Activated T-helper 1 cell treated with anti-CD3 and anti-CD28 coated beads, Interleukin-12 subunit alpha, Interleukin-12 subunit beta, Interleukin-2, Interleukin-4 antibody, amounts not matched to agents 30 ng/mL and 10 ng/mL and 1 ng/mL, durations not matched to agents 14 hours and 24 hours and 36 hours (primary cell): ENCODE measurements at regions of chr1 and their contacts with region 1.

Region 1: DNA sequence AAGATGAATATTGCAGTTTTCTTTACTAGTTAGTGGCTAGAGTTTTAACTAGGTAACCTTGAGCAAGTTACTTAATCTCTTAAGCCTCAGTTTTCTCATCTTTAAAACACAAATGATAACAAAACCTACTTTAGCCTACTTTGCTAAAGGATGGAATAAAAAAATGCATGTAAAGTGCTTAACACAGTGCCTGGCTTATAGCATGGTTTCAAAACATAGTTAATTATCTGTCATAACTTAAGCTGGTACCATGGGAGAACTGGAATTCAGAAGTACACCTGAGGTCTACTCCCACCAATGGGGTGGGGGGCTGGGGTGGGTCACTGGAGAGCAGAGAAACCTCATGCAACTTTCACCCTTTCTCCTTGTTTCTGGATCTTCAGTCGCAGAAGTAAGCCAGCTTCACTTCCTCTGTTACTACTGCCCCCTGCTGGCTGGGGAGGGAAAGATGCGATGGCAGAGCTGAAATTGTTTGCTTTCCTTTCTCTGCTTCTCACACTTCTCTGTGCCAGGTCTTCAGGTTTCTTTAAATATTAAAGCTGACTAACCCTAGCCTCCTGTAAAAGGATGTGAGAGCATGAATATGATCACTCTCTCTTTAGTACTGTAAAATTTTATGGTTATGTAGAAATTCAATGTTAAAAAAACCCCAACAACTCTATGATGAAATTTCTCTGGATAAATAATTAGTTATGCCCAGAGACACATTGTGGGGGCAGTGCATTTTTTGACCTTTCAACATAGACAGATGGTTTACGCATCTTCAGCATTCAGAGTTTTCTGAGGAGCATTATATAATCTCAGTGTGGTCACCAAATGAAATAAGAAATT is 324.2 kb downstream of the HLX start:
- DNase-seq: peak; percentile 51
- H3K4me3 Mint-ChIP-seq: no peak overlapping the region
- H3K27ac Mint-ChIP-seq: no peak overlapping the region
- H3K4me1 Mint-ChIP-seq: peaks cover 9% of the 10 kb centered on the region
- H3K27me3 Mint-ChIP-seq: peaks cover 2% of the 10 kb centered on the region

Region 2: GRCh38 chr1:220810179-220810653 is 393.2 kb before region 1 on chr1:
- intact Hi-C with region 1: loop called (anchors 1 kb)
- DNase-seq: peak; percentile 55
- H3K4me3 Mint-ChIP-seq: no peak overlapping the region
- H3K27ac Mint-ChIP-seq: no peak overlapping the region
- H3K4me1 Mint-ChIP-seq: peaks cover 9% of the 10 kb centered on the region
- H3K27me3 Mint-ChIP-seq: peaks cover 8% of the 10 kb centered on the region

Region 3: GRCh38 chr1:220873868-220874655 is 329.4 kb before region 1 on chr1:
- intact Hi-C with region 1: loop called (anchors 1 kb)
- DNase-seq: no peak
- H3K4me3 Mint-ChIP-seq: no peak overlapping the region
- H3K27ac Mint-ChIP-seq: no peak overlapping the region
- H3K4me1 Mint-ChIP-seq: peaks cover 22% of the 10 kb centered on the region
- H3K27me3 Mint-ChIP-seq: peaks cover 58% of the 10 kb centered on the region

Region 4: GRCh38 chr1:221069178-221069903 is 134.1 kb before region 1 on chr1:
- intact Hi-C with region 1: loop called (anchors 5 kb)
- DNase-seq: no peak
- H3K4me3 Mint-ChIP-seq: no peak overlapping the region
- H3K27ac Mint-ChIP-seq: peak overlapping the region; percentile 77
- H3K4me1 Mint-ChIP-seq: peaks cover 12% of the 10 kb centered on the region
- H3K27me3 Mint-ChIP-seq: no peaks in the 10 kb centered on the region

Region 5: GRCh38 chr1:221366495-221367095 is 163.2 kb after region 1 on chr1:
- intact Hi-C with region 1: no loop called
- DNase-seq: no peak
- H3K4me3 Mint-ChIP-seq: no peak overlapping the region
- H3K27ac Mint-ChIP-seq: no peak overlapping the region
- H3K4me1 Mint-ChIP-seq: no peaks in the 10 kb centered on the region
- H3K27me3 Mint-ChIP-seq: peaks cover 10% of the 10 kb centered on the region